Mammary epithelial cell (primary cell): ENCODE measurements at regions of chr5 and their contacts with region 1.

Region 1: DNA sequence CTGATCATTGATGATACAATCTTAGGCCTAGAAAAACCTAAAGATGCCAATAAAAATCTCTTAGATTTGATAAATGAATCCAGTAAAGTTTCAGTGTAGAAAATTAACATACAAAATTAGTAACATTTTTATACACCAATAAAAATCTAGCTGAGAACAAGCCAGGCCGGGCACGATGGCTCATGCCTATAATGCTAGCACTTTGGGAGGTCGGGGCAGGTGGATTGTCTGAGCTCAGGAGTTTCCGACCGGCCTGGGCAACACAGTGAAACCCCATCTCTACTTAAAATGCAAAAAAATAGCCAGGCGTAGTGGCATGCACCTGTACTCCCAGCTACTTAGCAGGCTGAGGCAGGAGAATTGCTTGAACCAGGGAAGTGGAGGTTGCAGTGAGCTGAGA is 84.4 kb downstream of the SLCO6A1 start:
- DNase-seq: no peak
- H3K4me3 ChIP-seq: no peak overlapping the region
- H3K27ac ChIP-seq: no peak overlapping the region
- H3K4me1 ChIP-seq: no peaks in the 10 kb centered on the region
- H3K27me3 ChIP-seq: no peaks in the 10 kb centered on the region
- CTCF ChIP-seq: no peak

Region 2: DNA sequence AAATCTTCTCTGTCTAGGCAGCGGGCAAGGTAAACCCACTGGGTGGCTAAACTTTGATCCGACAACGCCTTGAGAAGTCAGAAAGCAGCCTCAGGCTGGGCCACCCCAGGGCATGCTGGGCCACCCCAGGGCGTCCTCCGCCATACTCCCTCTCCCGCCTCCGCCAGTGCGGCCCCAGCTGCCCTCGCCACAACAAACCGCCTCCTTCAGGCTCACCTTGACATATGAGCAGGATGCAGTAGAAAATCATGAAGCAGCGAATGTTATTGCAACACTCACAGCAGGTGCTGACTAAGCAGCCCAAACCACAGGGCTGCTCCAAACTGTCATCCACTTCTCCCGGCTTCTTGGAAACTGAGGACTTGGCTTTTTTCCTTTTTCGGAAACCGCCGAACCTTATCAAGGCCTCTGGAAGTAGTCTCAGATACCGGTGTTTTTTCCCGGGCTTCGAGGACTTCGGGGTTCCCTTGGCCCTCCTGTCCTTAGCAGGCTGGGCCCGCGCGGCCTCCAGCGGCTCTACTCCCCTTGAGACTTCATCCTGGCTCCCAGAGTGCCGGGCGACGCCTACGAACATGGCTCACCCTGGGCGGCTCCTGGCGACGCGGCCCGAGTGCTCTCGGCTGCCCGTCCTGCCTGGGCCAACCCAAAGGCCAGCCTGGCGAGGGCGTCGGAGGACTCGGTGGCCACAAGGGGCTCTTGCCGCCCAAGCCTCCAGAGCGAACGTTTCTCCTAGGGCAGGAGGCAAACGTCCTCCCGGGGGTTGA is 84.0 kb after region 1 on chr5 and contains the start of gene SLCO6A1:
- CTCF ChIA-PET with region 1: no interaction called
- dilution Hi-C with region 1: loop called (anchors 5 kb)
- in situ Hi-C with region 1: no loop called
- intact Hi-C with region 1: no loop called
- DNase-seq: no peak
- H3K4me3 ChIP-seq: no peak within 1 kb of the TSS
- H3K27ac ChIP-seq: no peak within 1 kb of the TSS
- H3K4me1 ChIP-seq: no peaks in the 10 kb centered on the region
- H3K27me3 ChIP-seq: no peaks in the 10 kb centered on the region
- CTCF ChIP-seq: no peak
- total RNA-seq, gene SLCO6A1: not detected